GM10248 (cell line): ENCODE measurements at regions of chr1 and their contacts with region 1.

Region 1: GRCh38 chr1:92858564-92859399 is 26.9 kb downstream of the RPL5 start:
- DNase-seq: peak; percentile 68
- CTCF ChIP-seq: peak; percentile 90

Region 2: DNA sequence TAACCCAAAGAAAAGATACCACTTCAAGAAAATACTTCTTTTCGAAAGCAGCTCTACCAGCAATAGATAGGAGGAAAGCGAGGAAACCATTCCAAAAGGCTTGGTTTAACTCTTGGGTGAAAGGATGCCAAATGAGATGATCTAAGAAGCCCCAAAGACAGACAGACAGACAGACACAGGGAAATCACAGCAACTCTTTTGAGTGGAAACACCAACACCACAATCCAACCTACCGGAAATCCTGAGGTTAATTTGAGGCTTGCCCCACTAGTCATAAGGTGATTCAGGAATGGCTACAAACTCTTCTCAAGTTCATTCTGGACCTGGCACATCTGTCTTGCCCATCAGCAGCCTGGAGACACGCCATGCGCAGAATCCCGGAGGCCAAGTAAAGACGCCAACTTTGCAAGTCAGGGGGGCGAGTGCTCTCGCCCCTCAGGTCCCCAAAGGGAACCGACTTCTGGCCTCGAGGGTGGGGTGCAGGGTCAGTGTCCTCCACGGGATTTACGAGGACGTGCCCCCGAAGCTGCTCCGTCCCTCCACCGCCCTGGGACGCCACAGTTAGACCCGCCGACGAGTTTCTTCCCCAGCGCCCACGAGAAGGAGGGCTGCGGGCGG is 74.7 kb before region 1 on chr1:
- CTCF ChIA-PET with region 1: no interaction called
- POLR2A ChIA-PET with region 1: no interaction called
- DNase-seq: peak; percentile 38
- CTCF ChIP-seq: no peak

Region 3: DNA sequence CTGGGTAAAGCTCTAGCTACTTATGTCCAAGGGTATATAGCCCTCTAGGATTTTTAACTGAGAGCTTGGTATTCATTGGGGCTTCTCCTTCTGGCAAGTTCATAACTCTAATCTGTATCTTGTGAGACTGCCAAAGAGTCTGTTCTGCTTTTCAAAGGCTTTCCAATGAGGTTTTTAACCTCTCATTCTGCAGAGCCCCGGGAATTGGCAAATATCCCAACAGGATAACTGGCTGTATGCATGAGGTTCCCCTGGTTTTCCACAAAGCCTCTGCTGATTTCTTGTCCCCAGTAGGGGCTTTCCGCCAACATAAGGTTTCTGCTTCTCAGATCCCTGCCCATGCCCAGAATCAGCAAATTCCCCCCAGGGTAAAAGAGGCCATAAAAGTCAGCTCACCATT is 13.9 kb after region 1 on chr1:
- CTCF ChIA-PET with region 1: interaction called, 50 read pairs
- POLR2A ChIA-PET with region 1: interaction called, 5 read pairs
- DNase-seq: no peak
- CTCF ChIP-seq: no peak

Region 4: GRCh38 chr1:92901699-92902405 is 43.1 kb after region 1 on chr1:
- CTCF ChIA-PET with region 1: interaction called, 16 read pairs
- POLR2A ChIA-PET with region 1: no interaction called
- DNase-seq: no peak
- CTCF ChIP-seq: no peak

Region 5: DNA sequence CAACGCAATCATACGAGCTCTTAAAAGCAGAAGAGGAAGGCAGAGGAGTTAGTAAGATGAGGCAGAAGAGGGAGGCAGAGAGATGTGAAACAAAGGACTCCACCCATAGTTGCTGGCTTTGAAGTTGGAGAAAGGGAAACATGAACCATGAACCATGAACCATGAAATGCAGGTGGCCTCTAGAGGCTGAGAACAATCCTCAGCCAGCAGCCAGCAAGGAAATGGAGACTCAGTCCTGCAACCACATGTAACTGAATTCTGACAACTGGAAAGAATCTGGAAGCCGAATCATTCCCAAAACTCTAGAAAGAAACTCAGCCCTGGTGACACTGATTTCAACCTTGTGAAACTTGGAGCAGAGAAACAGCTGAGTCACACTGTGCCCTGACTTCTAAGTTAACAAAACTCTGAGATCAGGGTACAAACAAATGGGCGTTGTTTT is 92.4 kb after region 1 on chr1:
- CTCF ChIA-PET with region 1: interaction called, 166 read pairs
- POLR2A ChIA-PET with region 1: no interaction called
- DNase-seq: no peak
- CTCF ChIP-seq: peak; percentile 19

Region 6: DNA sequence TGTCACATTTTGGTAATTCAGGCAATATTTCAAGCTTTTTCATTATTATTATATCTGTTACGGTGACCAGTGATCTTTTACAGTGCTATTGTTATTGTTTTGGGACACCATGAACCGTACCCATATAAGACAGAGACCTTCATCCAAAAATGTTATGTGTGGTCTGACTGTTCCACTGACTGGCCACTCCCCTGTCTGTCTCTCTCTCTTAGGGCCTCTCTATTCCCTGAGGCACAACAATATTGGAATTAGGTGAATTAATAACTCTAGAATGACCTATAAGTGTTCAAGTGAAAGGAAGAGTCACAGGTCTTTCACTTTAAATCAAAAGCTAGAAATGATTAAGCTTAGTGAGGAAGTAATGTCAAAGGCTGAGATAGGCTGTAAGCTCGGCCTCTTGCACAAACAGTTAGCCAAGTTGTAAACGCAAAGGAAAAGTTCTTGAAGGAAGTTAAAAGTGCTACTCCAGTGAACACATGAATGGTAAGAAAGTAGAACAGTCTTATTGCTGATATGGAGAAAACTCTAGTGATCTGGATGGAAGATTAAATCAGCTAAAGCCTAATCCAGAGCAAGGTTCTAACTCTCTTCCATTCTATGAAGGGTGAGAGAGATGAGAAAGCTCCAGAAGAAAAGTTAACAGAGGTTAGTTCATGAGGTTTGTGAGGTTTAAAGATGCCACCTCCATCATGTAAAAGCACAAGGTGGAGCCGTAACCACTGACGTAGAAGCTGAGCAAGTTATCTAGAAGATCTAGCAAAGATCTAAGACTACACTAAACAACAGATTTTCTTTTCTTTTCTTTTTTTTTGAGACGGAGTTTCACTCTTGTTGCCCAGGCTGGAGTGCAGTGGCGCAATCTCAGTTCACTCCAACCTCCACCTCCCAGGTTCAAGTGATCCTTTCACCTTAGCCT is 122.2 kb after region 1 on chr1:
- CTCF ChIA-PET with region 1: interaction called, 26 read pairs
- POLR2A ChIA-PET with region 1: no interaction called
- DNase-seq: no peak
- CTCF ChIP-seq: no peak

Region 7: DNA sequence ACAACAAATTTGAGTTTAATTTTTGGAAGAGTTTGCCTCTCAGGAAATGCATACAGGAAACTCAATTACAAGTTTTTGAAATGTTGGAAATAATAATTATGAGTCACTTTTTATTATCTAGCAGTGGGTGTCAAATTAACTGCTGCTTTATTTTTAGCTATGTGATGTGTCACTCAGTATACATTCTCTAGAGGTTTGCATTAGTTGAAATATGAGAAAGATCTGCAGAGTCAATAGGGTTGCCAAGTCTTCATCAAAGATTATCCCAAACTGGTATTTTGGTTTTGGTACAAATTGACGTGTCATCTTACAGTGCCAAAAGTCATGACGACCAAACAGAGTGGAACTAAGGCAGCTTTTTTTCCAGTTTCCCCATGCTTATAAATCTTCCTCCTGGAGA is 156.8 kb after region 1 on chr1:
- CTCF ChIA-PET with region 1: interaction called, 12 read pairs
- POLR2A ChIA-PET with region 1: no interaction called
- DNase-seq: no peak
- CTCF ChIP-seq: no peak